ENCODE measurements at regions of chr13 and their contacts with region 1.

Region 1: DNA sequence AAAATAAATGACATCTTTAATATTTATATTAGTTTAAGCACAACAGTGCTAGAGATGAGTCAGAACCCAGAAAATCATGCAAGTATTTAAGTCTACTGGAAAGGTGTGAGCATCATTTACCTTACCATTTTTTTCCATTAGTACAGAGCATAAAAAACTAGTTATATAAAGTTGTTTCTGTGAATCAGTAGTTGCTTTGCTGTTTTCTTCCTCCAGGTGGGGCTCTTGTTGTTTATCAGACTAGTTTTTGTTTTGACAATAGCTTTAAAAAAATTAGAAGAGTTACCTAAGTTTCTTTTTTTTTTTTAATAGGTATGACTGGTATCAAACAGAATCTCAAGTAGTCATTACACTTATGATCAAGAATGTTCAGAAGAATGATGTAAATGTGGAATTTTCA is 12.7 kb downstream of the SUGT1 start:
- DNase-seq: no peak
- ATAC-seq: peak; percentile 42
- H3K4me3 Mint-ChIP-seq: no peak overlapping the region
- H3K27ac Mint-ChIP-seq: no peak overlapping the region
- H3K4me1 Mint-ChIP-seq: no peaks in the 10 kb centered on the region
- H3K27me3 Mint-ChIP-seq: no peaks in the 10 kb centered on the region

Region 2: DNA sequence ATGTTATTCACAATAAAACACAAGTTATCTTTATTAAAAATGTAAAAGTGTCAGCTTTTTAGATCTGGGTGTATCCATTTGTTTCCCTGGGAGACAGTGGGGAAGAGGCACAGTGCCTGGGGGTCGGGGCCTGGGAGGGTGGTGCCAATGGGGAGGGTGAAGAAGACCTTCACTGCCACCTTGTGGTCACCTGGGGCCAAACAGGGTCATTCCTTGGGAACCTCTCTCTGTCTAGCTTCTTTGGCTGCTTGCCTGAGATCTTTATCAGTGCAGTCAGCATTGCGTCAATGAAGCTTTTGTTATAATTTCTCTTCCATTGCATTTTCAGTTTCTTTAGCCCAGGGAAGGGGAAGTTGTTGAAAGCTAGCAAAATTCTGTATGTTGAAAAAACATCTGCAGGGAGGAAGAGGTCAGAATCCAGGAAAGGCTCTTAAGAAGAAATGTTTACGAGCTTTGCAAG is 144.0 kb after region 1 on chr13:
- CTCF ChIA-PET with region 1: interaction called, 20 read pairs
- POLR2A ChIA-PET with region 1: no interaction called
- DNase-seq: peak; percentile 61
- ATAC-seq: peak; percentile 60
- H3K4me3 Mint-ChIP-seq: no peak overlapping the region
- H3K27ac Mint-ChIP-seq: no peak overlapping the region
- H3K4me1 Mint-ChIP-seq: peaks cover 4% of the 10 kb centered on the region
- H3K27me3 Mint-ChIP-seq: no peaks in the 10 kb centered on the region

Measured in activated CD8-positive, alpha-beta T cell treated with anti-CD3 and anti-CD28 coated beads, Interleukin-2, amount 10 ng/mL, durations not matched to agents 7 days and 5 days (primary cell).